ENCODE measurements at regions of chr14 and their contacts with region 1.

Region 1: DNA sequence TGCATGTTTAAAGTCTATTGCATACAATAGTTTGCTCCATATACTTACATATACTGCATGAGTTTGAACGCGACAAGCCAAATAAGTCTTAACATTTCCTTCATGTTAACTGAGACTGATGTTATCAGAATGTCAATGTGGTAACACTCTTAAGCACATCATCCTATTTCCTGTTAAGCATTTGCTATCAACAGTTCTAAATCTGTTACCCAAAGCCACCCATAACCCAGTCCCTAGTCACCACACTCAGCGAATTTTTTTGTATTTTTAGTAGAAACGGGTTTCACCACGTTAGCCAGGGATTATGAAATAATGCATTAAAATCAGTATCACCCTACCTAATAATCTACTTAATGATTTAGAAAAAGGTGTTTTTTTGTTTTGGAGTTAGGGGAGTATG is 39.4 kb downstream of the HNRNPC start:
- DNase-seq: no peak
- H3K4me3 ChIP-seq: no peak overlapping the region
- H3K27ac ChIP-seq: no peak overlapping the region
- H3K4me1 ChIP-seq: no peaks in the 10 kb centered on the region
- H3K27me3 ChIP-seq: no peaks in the 10 kb centered on the region
- CTCF ChIP-seq: no peak

Region 2: DNA sequence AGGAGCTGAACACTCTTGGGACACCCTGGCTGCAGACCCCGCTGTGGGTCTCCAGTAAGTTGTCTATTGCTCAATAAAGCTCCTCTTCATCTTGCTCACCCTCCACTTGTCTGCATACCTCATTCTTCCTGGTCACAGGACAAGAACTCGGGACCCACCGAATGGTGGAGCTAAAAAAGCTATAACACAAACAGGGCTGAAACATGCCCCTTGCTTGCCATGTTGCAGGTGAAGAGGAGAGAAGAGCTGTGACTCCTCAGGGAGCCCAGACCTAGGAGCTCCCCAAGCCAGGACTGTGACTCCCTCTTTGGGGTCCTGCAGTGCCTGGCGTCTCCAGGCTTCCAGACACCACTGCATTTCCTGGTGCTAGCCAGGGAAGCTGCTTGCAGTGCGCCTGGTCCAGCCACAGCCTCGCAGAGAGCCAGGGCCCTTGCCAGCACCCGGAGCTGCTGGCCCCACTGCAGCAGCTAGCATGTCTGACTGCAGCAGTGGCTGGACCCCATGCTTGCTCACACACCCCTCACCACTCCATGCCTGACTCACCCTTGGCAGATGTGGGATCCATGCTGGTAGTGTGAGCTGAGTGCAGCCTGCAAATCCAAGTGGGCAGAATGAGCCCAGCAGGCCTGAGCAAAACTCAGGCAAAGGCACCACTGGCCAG is 36.8 kb before region 1 on chr14:
- intact Hi-C with region 1: no loop called
- DNase-seq: no peak
- H3K4me3 ChIP-seq: no peak overlapping the region
- H3K27ac ChIP-seq: no peak overlapping the region
- H3K4me1 ChIP-seq: no peaks in the 10 kb centered on the region
- H3K27me3 ChIP-seq: no peaks in the 10 kb centered on the region
- CTCF ChIP-seq: no peak

Region 3: DNA sequence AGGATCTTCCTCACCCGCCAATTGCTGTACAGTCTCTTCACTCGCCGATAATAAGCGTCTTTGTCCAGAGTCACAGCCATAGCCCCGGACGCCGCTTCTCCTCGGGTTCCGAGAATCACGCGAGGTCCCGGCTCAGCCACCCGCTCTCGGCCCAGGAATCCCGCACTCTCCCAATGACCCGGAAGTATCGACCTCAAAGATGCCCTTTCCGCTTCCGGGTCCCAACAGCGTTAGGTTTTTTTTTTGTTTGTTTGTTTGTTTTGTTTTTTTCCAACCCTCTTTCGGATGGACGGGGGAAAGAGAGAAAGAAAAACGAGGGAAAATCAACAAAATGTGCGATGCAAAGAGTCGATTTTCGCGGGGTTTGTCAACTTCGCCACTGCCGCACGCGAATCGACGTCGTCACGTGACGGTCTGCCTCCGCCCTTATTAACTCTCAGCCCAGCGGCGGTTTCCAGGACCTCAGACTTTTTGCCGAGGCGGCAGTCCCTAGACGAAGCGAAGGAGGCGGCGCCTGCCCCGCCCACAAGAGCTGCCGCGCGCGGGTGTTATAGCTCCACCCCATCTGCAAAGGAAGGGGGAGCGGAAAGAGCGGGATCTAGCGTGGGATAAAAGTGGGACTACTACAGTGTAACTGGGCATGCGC is 154.2 kb after region 1 on chr14 and contains the start of gene SUPT16H:
- intact Hi-C with region 1: loop called (anchors 10 kb)
- DNase-seq: peak; percentile 96
- H3K4me3 ChIP-seq: peak within 1 kb of the TSS; percentile 59
- H3K27ac ChIP-seq: peak within 1 kb of the TSS; percentile 73
- H3K4me1 ChIP-seq: no peaks in the 10 kb centered on the region
- H3K27me3 ChIP-seq: no peaks in the 10 kb centered on the region
- CTCF ChIP-seq: no peak
- total RNA-seq, gene SUPT16H: 43.9 to 71.8 TPM

Region 4: DNA sequence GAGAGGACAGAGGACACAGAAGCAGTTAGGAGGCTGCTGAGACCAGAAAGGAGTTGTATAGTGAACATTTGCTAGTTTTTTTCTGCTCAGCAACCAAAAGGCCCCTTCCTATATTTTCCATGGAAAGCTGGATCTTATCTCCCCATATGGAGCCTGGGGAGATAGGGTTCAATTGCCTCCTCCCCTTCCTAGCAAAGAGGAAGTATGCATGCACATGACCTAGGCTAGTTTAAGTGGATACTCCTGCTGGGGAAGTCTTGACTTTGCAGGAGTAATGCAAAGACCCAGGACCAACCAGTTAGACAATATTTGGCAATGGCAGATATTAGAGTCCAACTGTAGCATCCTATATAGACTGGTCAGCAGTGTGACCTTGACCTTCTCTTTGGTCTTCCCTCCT is 211.0 kb after region 1 on chr14:
- intact Hi-C with region 1: no loop called
- DNase-seq: no peak
- H3K4me3 ChIP-seq: no peak overlapping the region
- H3K27ac ChIP-seq: no peak overlapping the region
- H3K4me1 ChIP-seq: no peaks in the 10 kb centered on the region
- H3K27me3 ChIP-seq: no peaks in the 10 kb centered on the region
- CTCF ChIP-seq: no peak